ENCODE measurements at regions of chr19 and their contacts with region 1.

Region 1: GRCh38 chr19:42529248-42529764 is 1.0 kb upstream of the CEACAM1 start:
- DNase-seq: peak; percentile 80
- H3K4me3 Mint-ChIP-seq: peak overlapping the region; percentile 90
- H3K27ac Mint-ChIP-seq: peak overlapping the region; percentile 89
- H3K4me1 Mint-ChIP-seq: peaks cover 53% of the 10 kb centered on the region
- H3K27me3 Mint-ChIP-seq: peaks cover 5% of the 10 kb centered on the region

Region 2: DNA sequence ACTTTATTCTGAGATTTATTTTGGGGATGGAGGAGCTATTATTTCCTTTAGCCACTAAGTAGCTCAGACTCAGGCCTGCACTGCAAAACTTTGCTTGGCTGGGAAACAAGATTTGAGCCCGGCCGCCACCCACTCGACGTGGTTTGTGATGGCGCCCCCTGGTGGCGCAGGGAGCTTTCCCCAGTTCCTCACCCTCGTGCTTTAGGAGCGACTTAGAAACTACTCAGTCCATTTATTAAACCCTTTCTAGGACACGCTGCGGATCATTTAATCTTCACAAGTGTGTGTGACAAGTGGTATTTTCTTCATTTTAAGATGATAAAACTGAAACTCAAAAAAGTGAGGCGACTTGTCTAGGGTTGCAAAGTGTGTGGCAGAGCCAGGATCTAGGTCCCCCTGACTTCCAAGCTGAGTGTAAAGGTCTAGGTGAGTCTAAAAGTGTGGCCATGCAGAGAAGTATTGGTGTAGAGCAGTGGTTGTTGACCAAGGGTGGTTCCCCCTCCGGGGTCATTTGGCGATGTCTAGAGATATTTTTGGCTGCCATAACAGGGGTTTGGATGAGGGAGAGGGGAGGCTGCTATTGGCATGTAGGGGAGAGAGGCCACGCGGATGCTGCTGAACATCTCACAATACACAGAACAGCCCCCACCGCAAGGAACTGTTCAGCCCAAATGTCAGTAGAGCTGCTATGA is 88.8 kb before region 1 on chr19:
- CTCF ChIA-PET with region 1: interaction called, 56 read pairs
- POLR2A ChIA-PET with region 1: interaction called, 7 read pairs
- DNase-seq: peak; percentile 84
- H3K4me3 Mint-ChIP-seq: no peak overlapping the region
- H3K27ac Mint-ChIP-seq: peak overlapping the region; percentile 25
- H3K4me1 Mint-ChIP-seq: peaks cover 29% of the 10 kb centered on the region
- H3K27me3 Mint-ChIP-seq: peaks cover 5% of the 10 kb centered on the region

Region 3: GRCh38 chr19:42450314-42450934 is 78.9 kb before region 1 on chr19:
- CTCF ChIA-PET with region 1: interaction called, 198 read pairs
- POLR2A ChIA-PET with region 1: interaction called, 41 read pairs
- DNase-seq: peak; percentile 87
- H3K4me3 Mint-ChIP-seq: no peak overlapping the region
- H3K27ac Mint-ChIP-seq: no peak overlapping the region
- H3K4me1 Mint-ChIP-seq: peaks cover 35% of the 10 kb centered on the region
- H3K27me3 Mint-ChIP-seq: no peaks in the 10 kb centered on the region

Region 4: DNA sequence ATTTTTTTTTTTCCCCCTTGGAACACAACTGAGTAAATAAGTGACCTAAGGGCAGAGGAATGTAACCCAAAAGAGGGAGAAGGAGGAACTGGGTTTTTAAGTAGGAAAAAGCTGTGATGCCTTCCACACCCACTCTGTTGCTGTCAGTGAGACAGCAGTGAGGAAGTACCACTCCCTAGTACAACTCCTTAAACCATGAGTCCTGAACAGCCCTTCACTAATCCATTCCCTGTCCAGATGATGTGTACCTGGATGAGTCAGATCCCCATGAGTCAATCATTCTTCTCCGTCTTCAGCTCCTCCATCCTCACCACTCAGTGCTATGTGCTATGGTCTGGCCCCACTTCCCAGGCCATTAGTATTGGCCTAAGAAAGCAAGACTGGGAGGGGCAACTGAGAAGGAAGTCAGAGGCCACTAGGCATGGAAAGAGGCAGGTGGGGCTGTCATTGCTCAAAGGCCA is 73.7 kb before region 1 on chr19:
- CTCF ChIA-PET with region 1: interaction called, 198 read pairs
- POLR2A ChIA-PET with region 1: interaction called, 41 read pairs
- DNase-seq: no peak
- H3K4me3 Mint-ChIP-seq: no peak overlapping the region
- H3K27ac Mint-ChIP-seq: no peak overlapping the region
- H3K4me1 Mint-ChIP-seq: peaks cover 48% of the 10 kb centered on the region
- H3K27me3 Mint-ChIP-seq: peaks cover 2% of the 10 kb centered on the region

Region 5: GRCh38 chr19:42471554-42472249 is 57.6 kb before region 1 on chr19:
- CTCF ChIA-PET with region 1: interaction called, 11 read pairs
- POLR2A ChIA-PET with region 1: interaction called, 9 read pairs
- DNase-seq: no peak
- H3K4me3 Mint-ChIP-seq: no peak overlapping the region
- H3K27ac Mint-ChIP-seq: no peak overlapping the region
- H3K4me1 Mint-ChIP-seq: peaks cover 27% of the 10 kb centered on the region
- H3K27me3 Mint-ChIP-seq: peaks cover 3% of the 10 kb centered on the region

Region 6: DNA sequence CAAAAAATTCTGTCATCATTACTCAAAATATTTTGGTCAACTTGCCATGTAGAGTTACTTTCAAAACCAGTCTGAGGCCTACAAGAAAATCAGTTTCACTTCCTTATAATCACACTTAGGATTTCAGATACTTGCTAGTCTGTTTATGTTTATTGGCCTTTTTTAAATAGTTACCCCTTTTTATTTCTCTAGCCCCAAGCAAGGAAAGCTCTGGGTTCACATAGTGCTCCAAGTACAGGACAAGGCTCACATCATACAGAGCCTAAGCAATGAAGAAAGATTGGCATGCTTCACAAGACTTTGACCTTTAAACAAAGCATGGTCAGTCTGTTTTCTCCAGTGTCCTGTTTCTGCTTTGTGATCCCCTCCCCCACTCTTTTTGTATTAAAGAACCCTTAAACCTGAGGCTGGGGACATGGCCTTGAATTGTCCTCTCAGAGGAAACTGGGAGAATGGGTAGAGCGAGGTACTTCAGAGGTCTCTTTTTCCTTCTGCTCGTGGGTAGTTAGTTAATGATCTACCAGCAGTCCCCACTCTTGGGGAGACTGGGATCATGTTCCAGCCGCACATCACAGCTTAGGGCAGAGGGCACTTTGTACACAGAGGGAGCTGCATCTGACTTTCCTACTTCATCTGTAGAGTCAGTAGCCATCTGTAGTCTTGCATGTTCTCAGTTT is 31.7 kb before region 1 on chr19:
- CTCF ChIA-PET with region 1: interaction called, 11 read pairs
- POLR2A ChIA-PET with region 1: interaction called, 9 read pairs
- DNase-seq: no peak
- H3K4me3 Mint-ChIP-seq: no peak overlapping the region
- H3K27ac Mint-ChIP-seq: peak overlapping the region; percentile 57
- H3K4me1 Mint-ChIP-seq: peaks cover 64% of the 10 kb centered on the region
- H3K27me3 Mint-ChIP-seq: no peaks in the 10 kb centered on the region

Region 7: GRCh38 chr19:42519108-42519507 is 10.2 kb before region 1 on chr19:
- CTCF ChIA-PET with region 1: interaction called, 20 read pairs
- POLR2A ChIA-PET with region 1: interaction called, 7 read pairs
- DNase-seq: no peak
- H3K4me3 Mint-ChIP-seq: no peak overlapping the region
- H3K27ac Mint-ChIP-seq: no peak overlapping the region
- H3K4me1 Mint-ChIP-seq: peaks cover 35% of the 10 kb centered on the region
- H3K27me3 Mint-ChIP-seq: no peaks in the 10 kb centered on the region

Region 8: GRCh38 chr19:42589792-42590191 is 60.5 kb after region 1 on chr19:
- CTCF ChIA-PET with region 1: no interaction called
- POLR2A ChIA-PET with region 1: no interaction called
- DNase-seq: no peak
- H3K4me3 Mint-ChIP-seq: no peak overlapping the region
- H3K27ac Mint-ChIP-seq: no peak overlapping the region
- H3K4me1 Mint-ChIP-seq: no peaks in the 10 kb centered on the region
- H3K27me3 Mint-ChIP-seq: peaks cover 26% of the 10 kb centered on the region